ENCODE measurements at regions of chr7 and their contacts with region 1.

Region 1: DNA sequence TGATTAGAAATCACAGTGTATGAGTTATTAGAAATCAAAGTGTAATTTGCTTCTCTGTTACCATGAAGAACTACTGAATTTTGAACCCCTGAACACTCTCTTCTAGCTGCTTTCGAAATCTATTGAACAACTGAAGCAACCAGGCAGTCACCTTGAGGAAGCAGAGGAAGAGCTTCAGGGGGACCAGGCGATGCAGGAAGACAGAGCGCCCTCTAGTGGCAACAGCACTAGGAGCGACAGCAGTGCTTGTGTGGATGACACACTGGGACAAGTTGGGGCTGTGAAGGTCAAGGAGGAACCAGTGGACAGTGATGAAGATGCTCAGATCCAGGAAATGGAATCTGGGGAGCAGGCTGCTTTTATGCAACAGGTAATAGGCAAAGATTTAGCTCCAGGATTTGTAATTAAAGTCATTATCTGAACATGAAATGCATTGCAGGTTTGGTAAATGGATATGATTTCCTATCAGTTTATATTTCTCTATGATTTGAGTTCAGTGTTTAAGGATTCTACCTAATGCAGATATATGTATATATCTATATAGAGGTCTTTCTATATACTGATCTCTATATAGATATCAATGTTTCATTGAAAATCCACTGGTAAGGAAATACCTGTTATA is 170.7 kb downstream of the HDAC9 start:
- DNase-seq: peak; percentile 85
- ATAC-seq: peak; percentile 98
- H3K4me3 ChIP-seq: no peak overlapping the region
- H3K4me3 Mint-ChIP-seq: no peak overlapping the region
- H3K27ac ChIP-seq: peak overlapping the region in 1 of 2 donors; percentile 54
- H3K27ac Mint-ChIP-seq: peak overlapping the region; percentile 2
- H3K4me1 ChIP-seq: peaks cover 0 to 17% of the 10 kb centered on the region in 2 donors
- H3K4me1 Mint-ChIP-seq: peaks cover 10% of the 10 kb centered on the region
- H3K27me3 ChIP-seq: no peaks in the 10 kb centered on the region
- H3K27me3 Mint-ChIP-seq: no peaks in the 10 kb centered on the region
- CTCF ChIP-seq: peak; percentile 99

Region 2: GRCh38 chr7:16881844-16882243 is 1784.4 kb before region 1 on chr7 and contains the start of gene AGR3:
- CTCF ChIA-PET with region 1: no interaction called
- POLR2A ChIA-PET with region 1: no interaction called
- intact Hi-C with region 1: no loop called
- DNase-seq: no peak
- ATAC-seq: no peak
- H3K4me3 ChIP-seq: no peak within 1 kb of the TSS
- H3K4me3 Mint-ChIP-seq: no peak within 1 kb of the TSS
- H3K27ac ChIP-seq: no peak within 1 kb of the TSS
- H3K27ac Mint-ChIP-seq: no peak within 1 kb of the TSS
- H3K4me1 ChIP-seq: no peaks in the 10 kb centered on the region
- H3K4me1 Mint-ChIP-seq: peaks cover 6% of the 10 kb centered on the region
- H3K27me3 ChIP-seq: no peaks in the 10 kb centered on the region
- H3K27me3 Mint-ChIP-seq: no peaks in the 10 kb centered on the region
- CTCF ChIP-seq: no peak
- total RNA-seq, gene AGR3: not detected in 2 replicates

Region 3: GRCh38 chr7:18144166-18144565 is 522.1 kb before region 1 on chr7:
- CTCF ChIA-PET with region 1: no interaction called
- POLR2A ChIA-PET with region 1: no interaction called
- intact Hi-C with region 1: no loop called
- DNase-seq: peak; percentile 7
- ATAC-seq: no peak
- H3K4me3 ChIP-seq: no peak overlapping the region
- H3K4me3 Mint-ChIP-seq: no peak overlapping the region
- H3K27ac ChIP-seq: no peak overlapping the region
- H3K27ac Mint-ChIP-seq: no peak overlapping the region
- H3K4me1 ChIP-seq: no peaks in the 10 kb centered on the region
- H3K4me1 Mint-ChIP-seq: peaks cover 5% of the 10 kb centered on the region
- H3K27me3 ChIP-seq: no peaks in the 10 kb centered on the region
- H3K27me3 Mint-ChIP-seq: peaks cover 3% of the 10 kb centered on the region
- CTCF ChIP-seq: no peak

Region 4: DNA sequence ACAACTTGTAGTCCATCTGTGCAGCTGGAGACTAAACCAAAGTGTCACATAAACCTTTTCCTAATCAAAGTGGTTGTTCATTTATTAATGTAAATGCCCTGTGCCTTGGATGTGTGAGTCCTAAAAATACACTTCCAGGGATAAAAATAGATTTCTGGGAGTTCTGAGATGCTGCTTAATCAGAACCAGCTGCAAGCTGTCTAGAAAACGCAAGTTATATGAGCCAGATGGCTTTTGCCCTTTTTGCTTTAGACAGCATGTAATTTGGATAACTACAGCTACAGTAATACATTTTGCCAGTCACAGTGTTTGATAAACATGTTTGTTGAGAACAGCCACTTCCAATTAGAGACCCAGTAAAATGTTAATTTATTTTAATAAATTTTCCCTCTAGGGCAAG is 453.5 kb before region 1 on chr7:
- CTCF ChIA-PET with region 1: interaction called, 7 read pairs
- POLR2A ChIA-PET with region 1: no interaction called
- intact Hi-C with region 1: loop called (anchors 2 kb)
- DNase-seq: no peak
- ATAC-seq: no peak
- H3K4me3 ChIP-seq: no peak overlapping the region
- H3K4me3 Mint-ChIP-seq: no peak overlapping the region
- H3K27ac ChIP-seq: no peak overlapping the region
- H3K27ac Mint-ChIP-seq: no peak overlapping the region
- H3K4me1 ChIP-seq: peaks cover 6 to 7% of the 10 kb centered on the region in 2 donors
- H3K4me1 Mint-ChIP-seq: peaks cover 10% of the 10 kb centered on the region
- H3K27me3 ChIP-seq: no peaks in the 10 kb centered on the region
- H3K27me3 Mint-ChIP-seq: peaks cover 3% of the 10 kb centered on the region
- CTCF ChIP-seq: no peak

Region 5: GRCh38 chr7:18495412-18496340 is 170.5 kb before region 1 on chr7 and contains the start of gene HDAC9:
- CTCF ChIA-PET with region 1: interaction called, 11 read pairs
- POLR2A ChIA-PET with region 1: no interaction called
- intact Hi-C with region 1: no loop called
- DNase-seq: peak; percentile 77
- ATAC-seq: peak; percentile 90
- H3K4me3 ChIP-seq: peak within 1 kb of the TSS; percentile 52 to 87 (median 75)
- H3K4me3 Mint-ChIP-seq: peak within 1 kb of the TSS; percentile 80
- H3K27ac ChIP-seq: peak within 1 kb of the TSS; percentile 65 to 80
- H3K27ac Mint-ChIP-seq: peak within 1 kb of the TSS; percentile 82
- H3K4me1 ChIP-seq: peaks cover 25 to 50% of the 10 kb centered on the region in 2 donors
- H3K4me1 Mint-ChIP-seq: peaks cover 57% of the 10 kb centered on the region
- H3K27me3 ChIP-seq: no peaks in the 10 kb centered on the region
- H3K27me3 Mint-ChIP-seq: no peaks in the 10 kb centered on the region
- CTCF ChIP-seq: no peak
- total RNA-seq, gene HDAC9: 64.8 and 67.7 TPM in 2 replicates

Region 6: GRCh38 chr7:18590744-18591340 is 75.4 kb before region 1 on chr7:
- CTCF ChIA-PET with region 1: interaction called, 10 read pairs
- POLR2A ChIA-PET with region 1: no interaction called
- intact Hi-C with region 1: loop called (anchors 10 kb)
- DNase-seq: peak; percentile 21
- ATAC-seq: peak; percentile 24
- H3K4me3 ChIP-seq: no peak overlapping the region
- H3K4me3 Mint-ChIP-seq: no peak overlapping the region
- H3K27ac ChIP-seq: peak overlapping the region in 1 of 2 donors; percentile 60
- H3K27ac Mint-ChIP-seq: no peak overlapping the region
- H3K4me1 ChIP-seq: peaks cover 14 to 19% of the 10 kb centered on the region in 2 donors
- H3K4me1 Mint-ChIP-seq: peaks cover 24% of the 10 kb centered on the region
- H3K27me3 ChIP-seq: no peaks in the 10 kb centered on the region
- H3K27me3 Mint-ChIP-seq: no peaks in the 10 kb centered on the region
- CTCF ChIP-seq: peak; percentile 41

Region 7: GRCh38 chr7:18655912-18656311 is 10.3 kb before region 1 on chr7:
- CTCF ChIA-PET with region 1: interaction called, 24 read pairs
- POLR2A ChIA-PET with region 1: no interaction called
- intact Hi-C with region 1: no loop called
- DNase-seq: no peak
- ATAC-seq: no peak
- H3K4me3 ChIP-seq: no peak overlapping the region
- H3K4me3 Mint-ChIP-seq: no peak overlapping the region
- H3K27ac ChIP-seq: no peak overlapping the region
- H3K27ac Mint-ChIP-seq: peak overlapping the region; percentile 22
- H3K4me1 ChIP-seq: no peaks in the 10 kb centered on the region
- H3K4me1 Mint-ChIP-seq: peaks cover 3% of the 10 kb centered on the region
- H3K27me3 ChIP-seq: no peaks in the 10 kb centered on the region
- H3K27me3 Mint-ChIP-seq: no peaks in the 10 kb centered on the region
- CTCF ChIP-seq: no peak

Region 8: GRCh38 chr7:18770154-18770811 is 104.1 kb after region 1 on chr7:
- CTCF ChIA-PET with region 1: no interaction called
- POLR2A ChIA-PET with region 1: no interaction called
- intact Hi-C with region 1: no loop called
- DNase-seq: no peak
- ATAC-seq: no peak
- H3K4me3 ChIP-seq: no peak overlapping the region
- H3K4me3 Mint-ChIP-seq: no peak overlapping the region
- H3K27ac ChIP-seq: no peak overlapping the region
- H3K27ac Mint-ChIP-seq: no peak overlapping the region
- H3K4me1 ChIP-seq: no peaks in the 10 kb centered on the region
- H3K4me1 Mint-ChIP-seq: no peaks in the 10 kb centered on the region
- H3K27me3 ChIP-seq: no peaks in the 10 kb centered on the region
- H3K27me3 Mint-ChIP-seq: no peaks in the 10 kb centered on the region
- CTCF ChIP-seq: no peak

Measured in B cell (primary cell).